ENCODE measurements at regions of chr11 and their contacts with region 1.

Region 1: GRCh38 chr11:17384002-17384511 is 4.4 kb downstream of the KCNJ11 start:
- DNase-seq: peak; percentile 90
- ATAC-seq: peak; percentile 64
- H3K4me3 Mint-ChIP-seq: no peak overlapping the region
- H3K27ac Mint-ChIP-seq: no peak overlapping the region
- H3K4me1 Mint-ChIP-seq: no peaks in the 10 kb centered on the region
- H3K27me3 Mint-ChIP-seq: peaks cover 8% of the 10 kb centered on the region

Region 2: GRCh38 chr11:17366495-17366894 is 17.6 kb before region 1 on chr11:
- CTCF ChIA-PET with region 1: interaction called, 20 read pairs
- POLR2A ChIA-PET with region 1: no interaction called
- intact Hi-C with region 1: no loop called
- DNase-seq: no peak
- ATAC-seq: no peak
- H3K4me3 Mint-ChIP-seq: no peak overlapping the region
- H3K27ac Mint-ChIP-seq: no peak overlapping the region
- H3K4me1 Mint-ChIP-seq: no peaks in the 10 kb centered on the region
- H3K27me3 Mint-ChIP-seq: no peaks in the 10 kb centered on the region

Region 3: DNA sequence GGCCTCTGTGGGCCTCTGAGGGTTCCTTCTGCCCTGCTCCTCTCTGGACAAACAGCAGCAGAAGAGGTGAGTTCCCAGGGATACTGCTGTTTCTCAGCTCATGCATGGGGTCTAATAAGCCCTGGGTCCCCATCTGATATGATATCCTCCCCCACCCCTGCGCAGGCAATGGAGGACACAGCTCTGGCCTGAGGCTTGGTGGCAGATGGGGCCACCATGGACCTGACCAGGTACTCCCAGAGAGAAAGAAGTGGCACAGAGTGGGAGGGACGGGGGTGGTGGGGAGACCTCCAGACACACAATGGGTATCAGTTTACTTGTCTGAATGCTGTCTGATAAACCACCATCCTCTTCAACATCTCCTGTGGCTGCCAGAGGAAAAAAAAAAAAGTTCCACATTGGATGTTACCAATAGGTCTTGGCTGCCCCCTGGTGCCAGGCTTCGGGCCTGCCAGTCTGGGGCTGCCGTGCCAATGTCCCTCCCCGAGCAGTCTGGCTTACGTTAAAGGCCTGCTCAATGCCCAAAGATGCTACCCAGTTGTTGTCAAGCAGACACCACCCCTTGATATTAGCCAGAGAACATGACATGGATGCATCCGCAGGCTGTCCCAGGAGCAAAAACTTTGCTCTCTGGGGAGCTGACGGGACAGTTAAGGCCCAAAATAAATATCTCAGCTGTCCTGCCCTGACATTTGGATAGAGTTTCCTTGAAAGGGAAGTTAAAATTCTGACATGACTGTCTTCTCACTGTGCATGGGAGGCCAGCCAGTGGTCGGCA is 120.5 kb after region 1 on chr11:
- CTCF ChIA-PET with region 1: interaction called, 99 read pairs
- POLR2A ChIA-PET with region 1: no interaction called
- intact Hi-C with region 1: loop called (anchors 1 kb)
- DNase-seq: peak; percentile 88
- ATAC-seq: peak; percentile 90
- H3K4me3 Mint-ChIP-seq: no peak overlapping the region
- H3K27ac Mint-ChIP-seq: no peak overlapping the region
- H3K4me1 Mint-ChIP-seq: no peaks in the 10 kb centered on the region
- H3K27me3 Mint-ChIP-seq: peaks cover 7% of the 10 kb centered on the region

Region 4: DNA sequence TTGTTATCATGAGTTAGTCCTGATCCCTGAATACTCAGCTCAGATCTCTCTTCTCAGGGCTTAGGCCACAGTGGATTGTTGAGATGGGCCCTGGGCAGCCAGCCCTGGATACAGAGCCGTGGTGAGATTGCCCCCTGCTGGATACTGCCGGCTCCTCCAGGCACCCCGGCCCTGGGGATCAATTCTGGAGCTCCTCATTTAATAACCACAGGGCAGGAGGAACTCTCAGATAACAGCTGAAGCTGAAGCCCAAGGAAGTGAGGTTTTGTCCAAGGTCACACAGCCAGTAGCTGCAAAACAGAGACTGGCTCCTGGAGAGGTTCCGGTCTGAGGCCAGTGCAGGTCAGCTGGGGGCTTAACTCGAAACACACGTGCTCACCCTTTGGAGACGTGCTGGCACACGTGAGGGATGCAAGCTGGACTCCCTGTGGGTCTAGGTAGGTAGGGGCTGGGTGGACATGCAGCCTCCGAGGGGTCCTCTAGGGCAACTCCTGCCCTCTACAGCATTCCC is 144.2 kb after region 1 on chr11:
- CTCF ChIA-PET with region 1: interaction called, 26 read pairs
- POLR2A ChIA-PET with region 1: no interaction called
- intact Hi-C with region 1: loop called (anchors 1 to 5 kb)
- DNase-seq: peak; percentile 76
- ATAC-seq: peak; percentile 91
- H3K4me3 Mint-ChIP-seq: no peak overlapping the region
- H3K27ac Mint-ChIP-seq: no peak overlapping the region
- H3K4me1 Mint-ChIP-seq: no peaks in the 10 kb centered on the region
- H3K27me3 Mint-ChIP-seq: peaks cover 2% of the 10 kb centered on the region

Measured in activated CD4-positive, alpha-beta T cell treated with anti-CD3 and anti-CD28 coated beads for 36 hours (primary cell).